Activated naive CD4-positive, alpha-beta T cell treated with anti-CD3 and anti-CD28 coated beads for 36 hours (primary cell): ENCODE measurements at regions of chr12 and their contacts with region 1.

Region 1: GRCh38 chr12:52023182-52023975 is 16.6 kb downstream of the TAMALIN start:
- DNase-seq: peak; percentile 94
- H3K4me3 Mint-ChIP-seq: peak overlapping the region; percentile 89
- H3K27ac Mint-ChIP-seq: peak overlapping the region; percentile 97
- H3K4me1 Mint-ChIP-seq: peaks cover 39% of the 10 kb centered on the region
- H3K27me3 Mint-ChIP-seq: no peaks in the 10 kb centered on the region

Region 2: DNA sequence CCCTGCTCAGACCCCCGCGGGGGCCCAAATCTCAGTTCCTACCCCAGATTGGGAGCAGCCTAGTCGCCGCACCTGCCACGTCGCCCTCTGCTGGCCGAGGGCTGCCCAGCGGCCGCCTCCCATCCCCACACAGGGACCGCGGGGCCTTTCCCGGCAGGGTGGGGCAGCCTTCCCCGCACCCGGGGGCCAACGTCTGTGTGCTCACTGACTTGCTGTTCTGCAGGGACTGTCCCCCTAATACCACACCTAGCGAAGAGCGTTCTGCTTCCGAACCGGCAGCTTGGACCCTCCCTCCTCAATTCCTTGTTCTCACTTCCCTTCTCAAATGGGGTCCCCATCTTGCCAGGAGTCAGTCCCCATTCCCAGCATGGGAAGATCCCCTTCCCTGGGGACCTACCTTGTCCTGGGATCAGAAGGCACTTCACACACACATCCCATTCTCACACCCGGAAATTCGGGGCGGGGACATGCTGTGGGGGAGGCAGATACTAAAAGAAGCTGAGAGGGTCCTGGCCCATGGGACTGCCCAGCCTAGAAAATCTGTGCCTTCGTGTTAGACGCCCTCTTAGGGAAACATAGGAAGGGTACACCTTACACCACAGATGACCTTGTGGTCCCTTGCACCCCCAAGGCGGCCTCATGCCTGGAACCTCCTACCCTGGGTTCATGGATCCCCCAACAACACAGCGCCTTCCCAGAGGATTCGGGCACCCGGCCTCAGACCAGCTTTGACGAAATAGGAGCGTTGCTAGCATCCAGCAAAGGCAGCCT is 99.7 kb before region 1 on chr12:
- CTCF ChIA-PET with region 1: interaction called, 5 read pairs
- intact Hi-C with region 1: loop called (anchors 1 kb)
- DNase-seq: peak; percentile 70
- H3K4me3 Mint-ChIP-seq: peak overlapping the region; percentile 14
- H3K27ac Mint-ChIP-seq: no peak overlapping the region
- H3K4me1 Mint-ChIP-seq: peaks cover 17% of the 10 kb centered on the region
- H3K27me3 Mint-ChIP-seq: no peaks in the 10 kb centered on the region

Region 3: DNA sequence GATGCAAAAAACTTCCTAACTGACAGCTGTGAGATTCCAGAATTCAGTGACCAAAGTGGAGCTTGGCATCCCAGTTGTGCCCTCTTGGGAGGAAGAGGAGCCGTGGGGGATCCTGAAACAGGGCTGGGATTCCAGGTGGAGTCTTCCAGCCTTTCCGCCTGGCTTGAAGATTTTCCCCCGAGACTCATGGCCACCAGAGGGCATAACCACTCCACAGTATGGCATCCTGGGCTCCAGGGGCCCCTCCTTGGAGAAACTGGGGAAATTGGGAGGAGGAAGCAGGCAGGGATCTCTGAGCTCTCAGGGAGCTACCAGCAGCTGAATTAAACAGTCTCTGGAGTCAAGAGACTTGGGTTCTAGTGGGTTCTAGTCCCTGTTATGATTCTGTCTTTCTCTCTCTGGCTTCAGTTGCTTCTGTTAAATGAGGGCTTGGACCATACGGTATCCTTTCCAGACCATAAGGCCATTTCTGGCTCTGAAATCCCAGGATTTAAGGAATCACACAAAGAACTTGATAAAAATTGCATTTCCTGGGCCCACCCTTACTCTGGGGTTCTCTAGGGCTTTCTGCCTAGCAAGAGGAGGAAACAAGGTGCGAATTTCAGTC is 19.2 kb before region 1 on chr12:
- CTCF ChIA-PET with region 1: interaction called, 319 read pairs
- intact Hi-C with region 1: loop called (anchors 1 kb)
- DNase-seq: peak; percentile 43
- H3K4me3 Mint-ChIP-seq: no peak overlapping the region
- H3K27ac Mint-ChIP-seq: no peak overlapping the region
- H3K4me1 Mint-ChIP-seq: peaks cover 20% of the 10 kb centered on the region
- H3K27me3 Mint-ChIP-seq: peaks cover 3% of the 10 kb centered on the region

Region 4: GRCh38 chr12:52063981-52064649 is 40.7 kb after region 1 on chr12:
- CTCF ChIA-PET with region 1: interaction called, 315 read pairs
- intact Hi-C with region 1: loop called (anchors 1 kb)
- DNase-seq: no peak
- H3K4me3 Mint-ChIP-seq: no peak overlapping the region
- H3K27ac Mint-ChIP-seq: peak overlapping the region; percentile 18
- H3K4me1 Mint-ChIP-seq: peaks cover 3% of the 10 kb centered on the region
- H3K27me3 Mint-ChIP-seq: no peaks in the 10 kb centered on the region

Region 5: DNA sequence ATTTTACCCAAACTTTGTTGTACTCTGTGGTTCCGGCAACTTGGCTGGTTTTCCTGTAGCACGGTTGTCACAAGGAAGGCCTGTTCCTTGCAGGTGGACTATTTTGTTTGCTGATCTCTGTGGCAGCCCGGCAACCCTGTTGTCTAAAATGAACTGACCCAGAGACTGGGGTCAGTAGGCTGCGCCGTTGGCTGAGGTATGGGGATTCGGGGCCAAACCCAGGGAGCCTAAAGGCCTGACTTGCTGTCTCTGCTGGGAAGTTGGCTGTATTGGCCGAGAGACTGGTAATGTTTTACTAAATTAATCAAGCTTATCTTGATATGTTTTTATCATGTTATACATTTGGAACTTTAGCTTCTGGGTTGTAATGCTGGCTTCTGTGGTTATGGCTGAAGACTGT is 70.0 kb after region 1 on chr12:
- CTCF ChIA-PET with region 1: interaction called, 306 read pairs
- intact Hi-C with region 1: no loop called
- DNase-seq: no peak
- H3K4me3 Mint-ChIP-seq: no peak overlapping the region
- H3K27ac Mint-ChIP-seq: no peak overlapping the region
- H3K4me1 Mint-ChIP-seq: no peaks in the 10 kb centered on the region
- H3K27me3 Mint-ChIP-seq: peaks cover 35% of the 10 kb centered on the region

Region 6: GRCh38 chr12:52192173-52192791 is 168.9 kb after region 1 on chr12:
- CTCF ChIA-PET with region 1: no interaction called
- intact Hi-C with region 1: no loop called
- DNase-seq: peak; percentile 29
- H3K4me3 Mint-ChIP-seq: no peak overlapping the region
- H3K27ac Mint-ChIP-seq: no peak overlapping the region
- H3K4me1 Mint-ChIP-seq: no peaks in the 10 kb centered on the region
- H3K27me3 Mint-ChIP-seq: no peaks in the 10 kb centered on the region

Region 7: DNA sequence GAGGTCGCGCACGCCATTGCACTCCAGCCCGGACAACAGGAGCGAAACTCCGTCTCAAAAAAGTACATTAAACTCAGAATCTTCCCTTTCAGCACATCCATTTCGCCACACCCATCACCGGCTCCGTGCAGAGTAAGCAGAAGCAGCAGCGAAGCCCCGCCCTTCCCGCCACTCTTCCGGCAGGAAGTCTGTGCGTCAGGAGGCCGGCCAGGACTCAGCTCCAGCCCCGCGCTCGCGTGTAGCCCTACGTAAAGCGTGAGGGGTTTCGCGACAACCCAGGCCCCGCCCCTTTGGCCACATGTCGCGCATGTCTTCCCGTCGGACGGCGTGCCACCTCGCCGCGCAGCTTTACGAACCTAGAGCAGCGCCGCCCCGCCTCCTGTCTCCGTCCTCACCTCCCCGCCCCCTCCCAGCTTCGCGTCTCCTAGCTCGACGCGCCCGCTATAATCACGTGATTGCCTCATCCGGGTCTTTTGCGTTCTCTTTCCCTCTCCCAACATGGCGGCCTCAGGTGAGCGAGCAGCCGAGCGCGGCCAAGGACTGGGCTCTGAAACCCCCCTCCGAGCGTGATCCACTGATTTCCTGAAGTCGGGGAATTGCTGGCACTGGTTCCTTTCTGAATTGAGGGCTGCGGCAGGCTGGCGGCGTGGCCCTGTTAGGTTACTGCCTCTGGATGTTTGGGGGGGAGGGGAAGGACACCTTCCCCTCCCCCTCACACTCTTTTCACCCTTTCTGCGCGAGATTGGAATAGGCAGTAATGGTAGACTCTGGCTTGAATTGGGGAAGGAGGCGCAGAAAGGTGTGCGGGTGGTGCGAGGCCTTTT is 982.8 kb after region 1 on chr12 and contains the start of gene EIF4B:
- CTCF ChIA-PET with region 1: no interaction called
- intact Hi-C with region 1: loop called (anchors 1 kb)
- DNase-seq: peak; percentile 100
- H3K4me3 Mint-ChIP-seq: peak within 1 kb of the TSS; percentile 92
- H3K27ac Mint-ChIP-seq: peak within 1 kb of the TSS; percentile 93
- H3K4me1 Mint-ChIP-seq: peaks cover 47% of the 10 kb centered on the region
- H3K27me3 Mint-ChIP-seq: no peaks in the 10 kb centered on the region
- total RNA-seq, gene EIF4B: 813 to 821 TPM